ENCODE measurements at regions of chr14 and their contacts with region 1.

Region 1: DNA sequence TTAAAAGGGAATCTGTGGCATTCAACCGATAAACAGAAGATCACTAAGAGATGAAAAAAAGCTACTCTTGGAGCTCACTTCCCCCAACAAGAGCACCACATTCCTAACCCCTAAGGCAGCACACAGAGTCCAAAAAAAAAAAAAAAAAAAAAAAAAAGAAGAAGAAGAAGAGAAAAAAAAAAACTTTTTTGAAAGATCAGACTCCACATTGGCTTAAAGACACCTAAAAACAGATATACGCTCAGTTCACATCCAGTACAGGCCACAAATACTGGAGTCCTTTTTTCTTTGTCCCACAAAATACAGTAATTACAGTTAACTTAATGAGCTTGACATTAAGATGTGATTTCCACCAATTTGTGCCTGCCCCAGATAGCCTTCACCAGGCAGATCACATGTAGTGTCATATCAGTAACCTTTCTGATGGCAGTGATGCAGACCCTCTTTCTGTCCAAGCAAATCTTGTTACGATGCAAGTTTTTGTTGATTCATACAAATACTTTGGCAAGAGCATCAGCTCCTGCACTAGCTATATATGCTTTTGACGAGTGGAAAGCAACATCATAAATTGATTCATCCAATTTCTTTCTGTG is 20.7 kb downstream of the COCH start:
- DNase-seq: no peak
- H3K4me3 ChIP-seq: no peak overlapping the region
- H3K27ac ChIP-seq: no peak overlapping the region
- H3K4me1 ChIP-seq: no peaks in the 10 kb centered on the region
- H3K27me3 ChIP-seq: no peaks in the 10 kb centered on the region
- CTCF ChIP-seq: no peak
- POLR2A ChIP-seq: no peak

Region 2: GRCh38 chr14:30656190-30656632 is 238.8 kb before region 1 on chr14:
- intact Hi-C with region 1: loop called in 1 of 2 experiments (anchors 10 kb)
- DNase-seq: peak; percentile 20 to 64 (median 26)
- H3K4me3 ChIP-seq: no peak overlapping the region
- H3K27ac ChIP-seq: no peak overlapping the region
- H3K4me1 ChIP-seq: no peaks in the 10 kb centered on the region
- H3K27me3 ChIP-seq: no peaks in the 10 kb centered on the region
- CTCF ChIP-seq: peak; percentile 55 to 68 (median 64)
- POLR2A ChIP-seq: no peak

Region 3: GRCh38 chr14:30808576-30808975 is 86.4 kb before region 1 on chr14:
- intact Hi-C with region 1: no loop called
- DNase-seq: no peak
- H3K4me3 ChIP-seq: no peak overlapping the region
- H3K27ac ChIP-seq: no peak overlapping the region
- H3K4me1 ChIP-seq: no peaks in the 10 kb centered on the region
- H3K27me3 ChIP-seq: no peaks in the 10 kb centered on the region
- CTCF ChIP-seq: no peak
- POLR2A ChIP-seq: no peak

Region 4: GRCh38 chr14:31026395-31027118 is 131.5 kb after region 1 on chr14:
- intact Hi-C with region 1: no loop called
- DNase-seq: peak; percentile 96 to 98 (median 97)
- H3K4me3 ChIP-seq: peak overlapping the region; percentile 9 to 99 (median 96)
- H3K27ac ChIP-seq: peak overlapping the region; percentile 94 to 100 (median 99)
- H3K4me1 ChIP-seq: peaks cover 0 to 36% of the 10 kb centered on the region in 2 donors
- H3K27me3 ChIP-seq: no peaks in the 10 kb centered on the region
- CTCF ChIP-seq: peak in 2 of 6 experiments; percentile 13 to 30
- POLR2A ChIP-seq: peak in 1 of 2 donors; percentile 93

Measured in adrenal gland (tissue), 19 donors.